Prostate gland (tissue), 2 donors: ENCODE measurements at regions of chr11 and their contacts with region 1.

Region 1: GRCh38 chr11:102268329-102269193 is 48.7 kb upstream of the BIRC3 start:
- DNase-seq: peak; percentile 95
- H3K4me3 ChIP-seq: peak overlapping the region; percentile 32 to 39
- H3K27ac ChIP-seq: peak overlapping the region; percentile 71 to 78
- H3K4me1 ChIP-seq: no peaks in the 10 kb centered on the region
- H3K27me3 ChIP-seq: no peaks in the 10 kb centered on the region
- CTCF ChIP-seq: peak; percentile 32 to 86 (median 70)
- POLR2A ChIP-seq: no peak

Region 2: GRCh38 chr11:102109896-102110760 is 158.4 kb before region 1 on chr11 and contains the start of gene YAP1:
- intact Hi-C with region 1: loop called (anchors 5 kb)
- DNase-seq: peak; percentile 86
- H3K4me3 ChIP-seq: peak within 1 kb of the TSS; percentile 73 to 96
- H3K27ac ChIP-seq: peak within 1 kb of the TSS; percentile 96 to 99
- H3K4me1 ChIP-seq: no peaks in the 10 kb centered on the region
- H3K27me3 ChIP-seq: no peaks in the 10 kb centered on the region
- CTCF ChIP-seq: peak in 2 of 4 experiments; percentile 12 to 38
- POLR2A ChIP-seq: peak; percentile 75
- total RNA-seq, gene YAP1: 137 to 210 TPM

Region 3: GRCh38 chr11:102154806-102155205 is 113.8 kb before region 1 on chr11:
- intact Hi-C with region 1: no loop called
- DNase-seq: no peak
- H3K4me3 ChIP-seq: no peak overlapping the region
- H3K27ac ChIP-seq: no peak overlapping the region
- H3K4me1 ChIP-seq: no peaks in the 10 kb centered on the region
- H3K27me3 ChIP-seq: no peaks in the 10 kb centered on the region
- CTCF ChIP-seq: no peak
- POLR2A ChIP-seq: no peak

Region 4: DNA sequence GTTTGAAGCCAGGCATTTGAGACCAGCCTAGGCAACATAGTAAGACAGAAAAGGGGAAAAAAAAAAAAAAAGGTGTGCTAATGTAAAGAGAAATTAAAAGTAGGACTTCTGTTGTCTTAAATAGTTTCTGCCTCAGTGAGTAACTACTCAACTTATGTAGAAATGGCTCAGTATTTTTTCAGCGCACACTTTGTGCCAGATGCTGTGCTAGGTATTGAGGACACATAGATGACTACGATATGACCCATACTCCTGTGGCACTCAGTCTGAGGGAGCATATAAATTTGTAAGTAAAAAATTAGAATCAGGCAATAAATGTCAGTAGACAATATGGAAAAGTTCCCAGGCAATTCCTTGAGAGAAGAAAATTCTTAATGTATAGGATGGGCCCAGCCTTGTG is 64.4 kb before region 1 on chr11:
- intact Hi-C with region 1: loop called (anchors 10 kb)
- DNase-seq: no peak
- H3K4me3 ChIP-seq: no peak overlapping the region
- H3K27ac ChIP-seq: no peak overlapping the region
- H3K4me1 ChIP-seq: no peaks in the 10 kb centered on the region
- H3K27me3 ChIP-seq: no peaks in the 10 kb centered on the region
- CTCF ChIP-seq: no peak
- POLR2A ChIP-seq: no peak

Region 5: DNA sequence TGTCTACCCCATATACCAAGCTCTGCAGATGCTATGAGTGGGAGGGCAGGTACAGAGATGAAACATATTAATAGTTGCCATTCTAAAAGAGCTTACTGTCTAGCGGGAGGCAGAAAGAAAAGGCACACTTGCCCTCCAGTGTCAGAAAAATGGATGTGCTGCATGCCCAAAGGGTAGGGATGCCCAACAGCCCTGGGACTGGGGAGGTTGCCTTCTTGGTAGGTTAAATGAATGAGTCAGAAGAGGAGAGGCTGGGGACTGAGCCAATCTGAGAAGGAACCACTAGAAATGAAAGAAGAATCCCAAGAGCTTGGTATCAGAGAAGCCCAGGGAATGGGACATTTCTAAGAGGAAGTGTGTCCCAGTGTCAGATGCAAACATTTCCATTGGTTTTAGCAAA is 49.9 kb after region 1 on chr11:
- intact Hi-C with region 1: no loop called
- DNase-seq: no peak
- H3K4me3 ChIP-seq: no peak overlapping the region
- H3K27ac ChIP-seq: no peak overlapping the region
- H3K4me1 ChIP-seq: no peaks in the 10 kb centered on the region
- H3K27me3 ChIP-seq: no peaks in the 10 kb centered on the region
- CTCF ChIP-seq: no peak
- POLR2A ChIP-seq: no peak

Region 6: GRCh38 chr11:102620818-102621561 is 352.4 kb after region 1 on chr11:
- intact Hi-C with region 1: no loop called
- DNase-seq: no peak
- H3K4me3 ChIP-seq: no peak overlapping the region
- H3K27ac ChIP-seq: no peak overlapping the region
- H3K4me1 ChIP-seq: no peaks in the 10 kb centered on the region
- H3K27me3 ChIP-seq: no peaks in the 10 kb centered on the region
- CTCF ChIP-seq: no peak
- POLR2A ChIP-seq: no peak